ENCODE measurements at regions of chr9 and their contacts with region 1.

Region 1: DNA sequence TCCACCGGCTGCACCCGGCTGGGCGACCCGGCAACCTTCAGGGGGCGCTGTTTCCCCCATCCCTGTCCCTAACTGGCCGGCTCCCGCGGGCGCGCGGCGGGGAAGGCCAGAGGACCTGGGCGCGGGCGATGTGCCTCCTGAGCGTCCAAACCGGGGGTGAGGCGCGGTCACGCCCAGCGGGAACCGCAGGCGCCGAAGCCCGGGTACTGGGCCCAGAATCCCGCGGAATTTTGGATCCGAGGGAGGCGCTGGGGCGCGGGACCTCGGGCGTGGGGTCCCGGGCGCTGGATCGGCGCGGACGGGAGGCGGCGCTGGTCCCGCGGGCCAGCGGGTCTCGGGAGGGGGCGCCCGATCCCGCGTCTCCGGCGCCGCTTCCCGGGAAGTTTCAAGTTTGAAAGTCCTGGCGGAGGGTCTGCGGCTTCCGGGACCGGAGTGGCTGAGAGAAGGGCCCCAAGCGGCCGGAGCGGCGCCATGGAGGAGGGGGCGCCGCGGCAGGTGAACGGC is at the start of gene PKN3:
- DNase-seq: peak; percentile 89 to 98
- ATAC-seq: peak; percentile 83 to 89
- H3K4me3 ChIP-seq: peak within 1 kb of the TSS; percentile 94
- H3K27ac ChIP-seq: peak within 1 kb of the TSS; percentile 95 to 100
- H3K4me1 ChIP-seq: peaks cover 9% of the 10 kb centered on the region
- CTCF ChIP-seq: peak; percentile 99
- EP300 ChIP-seq: no peak
- POLR2A ChIP-seq: peak; percentile 25
- RAD21 ChIP-seq: peak; percentile 35 to 61; a peak in 4 of 5 replicates
- polyA plus RNA-seq, gene PKN3: 7.6 and 9.0 TPM in 2 replicates

Region 2: DNA sequence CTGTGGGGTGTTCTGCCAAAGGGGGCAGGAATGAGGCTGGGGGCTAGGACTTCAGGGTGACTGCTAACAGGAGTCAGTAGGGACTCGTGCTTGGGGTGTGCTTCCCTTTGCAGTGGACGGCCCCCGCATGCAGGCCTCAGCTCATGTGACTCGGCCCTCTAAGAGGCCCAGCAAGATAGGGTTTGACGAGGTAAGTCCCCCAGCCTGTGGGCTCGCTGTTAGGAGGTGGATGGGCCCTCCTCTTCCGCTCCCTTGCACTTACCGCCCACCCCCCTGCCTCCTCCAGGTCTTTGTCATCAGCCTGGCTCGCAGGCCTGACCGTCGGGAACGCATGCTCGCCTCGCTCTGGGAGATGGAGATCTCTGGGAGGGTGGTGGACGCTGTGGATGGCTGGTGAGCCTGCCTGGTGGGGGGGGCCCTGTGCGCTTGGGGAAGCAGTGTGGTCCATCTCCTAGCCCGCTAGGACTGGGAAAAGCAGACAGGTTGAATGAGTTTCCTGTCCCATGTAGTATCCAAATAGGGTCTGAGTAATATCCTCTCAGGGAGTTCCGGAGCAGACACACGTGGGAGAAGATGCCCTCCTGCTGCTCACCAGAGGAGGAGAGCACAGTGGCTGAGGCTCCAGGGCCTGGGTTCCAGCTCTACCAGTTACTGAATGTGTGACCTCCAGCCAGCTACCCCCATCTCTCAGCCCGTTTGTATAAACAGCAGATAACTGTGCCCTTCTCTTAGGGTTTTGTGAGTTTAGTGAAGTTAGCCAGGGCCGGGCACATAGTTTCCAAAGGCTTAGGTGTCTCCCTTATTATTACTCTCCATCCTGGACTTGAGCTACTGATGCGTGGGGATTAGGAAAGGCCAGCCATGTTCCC is 273.6 kb before region 1 on chr9:
- CTCF ChIA-PET with region 1: no interaction called
- POLR2A ChIA-PET with region 1: no interaction called
- DNase-seq: no peak
- ATAC-seq: peak; percentile 39 to 41; a peak in 5 of 6 replicates
- H3K4me3 ChIP-seq: no peak overlapping the region
- H3K27ac ChIP-seq: no peak overlapping the region
- H3K4me1 ChIP-seq: no peaks in the 10 kb centered on the region
- CTCF ChIP-seq: no peak
- EP300 ChIP-seq: no peak
- POLR2A ChIP-seq: no peak
- RAD21 ChIP-seq: no peak

Region 3: DNA sequence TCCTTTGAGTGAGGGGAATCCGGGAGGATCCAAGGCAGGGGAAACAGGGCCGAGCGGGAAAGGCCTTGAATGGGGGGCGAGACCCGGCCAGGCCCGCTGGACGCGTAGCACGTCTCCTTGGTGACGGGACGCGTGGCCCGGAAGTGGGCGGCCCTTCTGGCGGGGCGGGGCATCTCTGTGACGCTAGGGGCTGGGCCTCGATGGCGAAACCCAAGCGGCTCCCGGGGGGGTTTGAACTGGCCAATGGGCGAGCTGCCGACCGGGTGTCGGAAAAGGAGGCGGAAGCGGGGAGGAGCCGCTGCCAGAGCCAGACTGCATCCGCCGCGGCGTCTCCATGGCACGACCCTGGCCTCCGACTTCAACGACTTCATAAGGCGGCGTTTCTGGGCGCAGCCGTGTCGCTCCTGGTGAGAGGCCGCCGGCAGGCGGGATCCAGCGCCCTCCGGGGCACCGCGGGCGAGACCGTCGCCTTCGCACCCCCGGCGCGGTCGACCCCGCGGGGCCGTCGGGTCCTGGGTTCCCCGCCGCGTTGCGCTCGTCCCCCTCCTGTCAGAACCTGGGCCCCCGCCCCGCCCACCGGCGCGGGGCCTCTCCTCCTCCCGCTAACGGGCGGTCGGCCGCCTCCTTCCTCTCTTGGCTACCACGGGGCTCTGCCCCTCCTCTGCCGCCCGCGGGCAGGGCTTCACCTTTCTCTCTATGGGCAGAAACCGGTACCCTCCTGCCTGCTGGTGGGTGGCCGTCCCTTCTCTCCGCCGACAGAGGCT is 246.5 kb before region 1 on chr9 and contains the start of gene ODF2:
- CTCF ChIA-PET with region 1: no interaction called
- POLR2A ChIA-PET with region 1: no interaction called
- DNase-seq: peak; percentile 96 to 98
- ATAC-seq: peak; percentile 89
- H3K4me3 ChIP-seq: peak within 1 kb of the TSS; percentile 100
- H3K27ac ChIP-seq: peak within 1 kb of the TSS; percentile 89 to 95
- H3K4me1 ChIP-seq: peaks cover 9% of the 10 kb centered on the region
- CTCF ChIP-seq: no peak
- EP300 ChIP-seq: no peak
- POLR2A ChIP-seq: peak; percentile 55
- RAD21 ChIP-seq: no peak
- polyA plus RNA-seq, gene ODF2: 22.9 and 24.7 TPM in 2 replicates

Region 4: DNA sequence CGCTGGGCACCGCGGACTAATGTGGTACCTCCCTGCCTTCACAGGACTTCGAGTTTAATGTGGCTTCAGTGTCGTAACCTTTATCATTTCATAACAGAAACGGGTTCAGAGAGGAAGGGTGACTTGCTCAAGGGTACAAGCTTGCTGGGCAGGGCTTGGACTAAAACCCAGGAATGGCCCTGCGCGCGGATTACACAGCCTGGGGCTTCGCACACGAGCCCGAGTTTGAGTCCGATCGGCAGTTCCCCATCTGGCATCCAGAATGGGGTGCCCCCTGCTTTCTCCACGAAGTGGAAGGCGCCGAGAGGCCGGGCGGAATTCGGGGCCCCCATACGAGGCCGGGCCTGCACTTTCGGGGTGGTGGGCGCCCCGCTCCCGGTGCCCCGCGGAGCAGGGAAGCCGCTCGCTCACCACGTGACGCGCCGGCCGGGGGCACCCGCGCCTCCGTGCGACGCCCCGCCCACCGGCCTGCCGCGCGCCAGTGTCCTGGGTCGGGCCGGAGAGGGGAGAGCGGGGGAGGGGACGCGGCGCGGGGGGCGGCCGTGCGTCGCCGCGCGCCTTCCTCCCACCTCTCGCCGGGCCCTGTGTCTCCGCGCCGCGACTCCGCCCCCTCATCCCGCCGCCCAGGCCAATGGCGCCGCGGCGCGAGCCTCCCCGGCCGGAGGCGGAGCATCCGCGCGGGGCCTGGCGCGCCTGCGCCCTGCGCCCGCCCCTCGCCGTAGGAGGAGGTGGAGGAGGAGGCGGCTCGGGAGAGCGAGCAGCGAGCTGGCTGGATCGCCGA is 13.8 kb before region 1 on chr9 and contains the start of gene SET:
- CTCF ChIA-PET with region 1: interaction called, 33 read pairs
- POLR2A ChIA-PET with region 1: interaction called, 6 read pairs
- DNase-seq: peak; percentile 94
- ATAC-seq: peak; percentile 68 to 81
- H3K4me3 ChIP-seq: peak within 1 kb of the TSS; percentile 100
- H3K27ac ChIP-seq: peak within 1 kb of the TSS; percentile 97 to 100
- H3K4me1 ChIP-seq: peaks cover 50% of the 10 kb centered on the region
- CTCF ChIP-seq: no peak
- EP300 ChIP-seq: no peak
- POLR2A ChIP-seq: peak; percentile 71
- RAD21 ChIP-seq: no peak
- polyA plus RNA-seq, gene SET: 293 and 518 TPM in 2 replicates

Region 5: DNA sequence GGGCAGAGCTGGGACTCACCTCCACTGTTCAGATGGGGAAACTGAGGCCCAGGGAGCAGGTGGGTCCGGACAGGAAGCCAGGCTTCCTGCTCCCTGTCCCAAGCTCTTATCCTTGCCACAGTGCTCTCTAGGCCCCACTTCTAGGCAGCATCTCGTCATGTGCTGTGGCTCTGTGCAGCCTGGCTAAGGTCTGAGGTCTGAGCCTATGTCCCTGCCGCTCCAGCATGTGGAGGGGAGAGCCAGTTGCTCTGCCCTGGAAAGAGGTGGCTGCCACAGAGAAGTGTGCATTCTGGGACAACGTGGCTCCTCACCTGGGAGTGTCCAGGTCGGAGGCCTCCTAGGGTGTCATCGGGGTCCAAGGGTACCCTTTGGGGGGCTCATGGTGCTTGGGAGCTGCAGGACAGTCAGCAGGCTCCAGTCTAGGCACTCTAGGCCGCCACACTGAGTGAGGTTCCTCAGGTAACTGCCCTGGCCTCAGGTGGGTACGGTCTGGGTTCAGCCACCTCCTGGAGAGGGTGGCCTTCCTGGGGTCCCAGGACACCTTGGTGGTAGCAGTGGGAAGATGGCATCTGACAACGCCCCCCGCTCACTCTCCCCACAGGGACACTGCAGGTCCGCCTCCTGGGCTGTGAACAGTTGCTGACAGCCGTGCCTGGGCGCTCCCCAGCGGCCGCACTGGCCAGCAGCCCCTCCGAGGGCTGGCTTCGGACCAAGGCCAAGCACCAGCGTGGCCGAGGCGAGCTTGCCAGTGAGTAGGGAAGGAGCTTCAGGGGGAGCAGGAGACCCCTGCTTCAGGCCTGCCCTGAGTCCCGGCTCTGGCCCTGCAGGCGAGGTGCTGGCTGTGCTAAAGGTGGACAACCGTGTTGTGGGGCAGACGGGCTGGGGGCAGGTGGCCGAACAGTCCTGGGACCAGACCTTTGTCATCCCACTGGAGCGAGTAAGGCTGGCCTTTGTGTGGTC is 10.2 kb after region 1 on chr9:
- CTCF ChIA-PET with region 1: interaction called, 44 read pairs
- POLR2A ChIA-PET with region 1: interaction called, 3 read pairs
- DNase-seq: no peak
- ATAC-seq: peak; percentile 20 to 51; a peak in 4 of 6 replicates
- H3K4me3 ChIP-seq: no peak overlapping the region
- H3K27ac ChIP-seq: no peak overlapping the region
- H3K4me1 ChIP-seq: no peaks in the 10 kb centered on the region
- CTCF ChIP-seq: no peak
- EP300 ChIP-seq: no peak
- POLR2A ChIP-seq: no peak
- RAD21 ChIP-seq: no peak

Measured in A549 (cell line).